ENCODE measurements at regions of chr19 and their contacts with region 1.

Region 1: DNA sequence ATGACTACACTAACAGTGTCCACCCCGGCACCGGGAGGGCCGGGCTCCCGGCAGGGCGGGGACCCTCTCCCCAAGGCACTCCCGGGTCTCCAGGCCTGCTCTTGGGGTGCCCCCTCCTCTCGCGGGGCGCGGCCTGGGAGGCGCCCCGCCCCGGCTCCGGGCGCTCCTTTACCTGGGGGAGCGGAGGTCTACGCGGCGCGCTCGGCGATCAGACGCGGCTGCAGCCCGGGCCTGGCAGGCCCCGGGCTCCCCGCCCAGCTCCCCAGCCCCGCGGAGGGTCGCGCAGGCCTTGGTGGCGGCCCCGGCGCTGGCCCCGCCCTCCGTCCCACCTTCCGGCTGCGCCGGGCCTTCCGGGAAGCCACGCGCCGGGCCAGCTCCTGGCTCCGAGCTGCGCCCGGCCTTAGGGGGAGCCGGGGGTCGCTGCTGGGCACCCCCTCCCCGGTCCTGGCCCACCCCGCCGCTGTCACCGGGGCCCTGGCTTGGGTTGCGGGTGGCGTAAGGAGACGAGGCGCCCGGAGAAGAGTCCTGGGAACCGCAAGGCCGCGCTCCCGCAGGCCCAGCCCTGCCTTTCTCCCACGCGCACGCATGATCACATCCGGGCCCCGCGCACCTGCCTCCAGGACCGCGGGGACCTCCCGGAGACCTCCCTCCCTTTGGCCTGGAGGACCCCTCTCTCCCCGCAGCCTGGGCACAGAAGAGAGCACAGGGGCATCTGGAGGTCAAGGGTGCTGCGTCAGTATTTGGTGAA is at the start of gene C19orf12:
- DNase-seq: peak; percentile 32 to 62 (median 47)
- H3K4me3 ChIP-seq: peak within 1 kb of the TSS; percentile 73 to 93 (median 84)
- H3K27ac ChIP-seq: peak within 1 kb of the TSS; percentile 74 to 90
- H3K4me1 ChIP-seq: peaks cover 7 to 52% (median 45%) of the 10 kb centered on the region in 4 experiments
- H3K27me3 ChIP-seq: no peaks in the 10 kb centered on the region

Region 2: GRCh38 chr19:29694669-29695627 is 20.2 kb before region 1 on chr19:
- CTCF ChIA-PET with region 1: interaction called, 98 read pairs
- POLR2A ChIA-PET with region 1: no interaction called
- DNase-seq: peak; percentile 74 to 85 (median 83)
- H3K4me3 ChIP-seq: no peak overlapping the region
- H3K27ac ChIP-seq: no peak overlapping the region
- H3K4me1 ChIP-seq: peaks cover 0 to 2% (median 0%) of the 10 kb centered on the region in 4 experiments
- H3K27me3 ChIP-seq: no peaks in the 10 kb centered on the region

Region 3: DNA sequence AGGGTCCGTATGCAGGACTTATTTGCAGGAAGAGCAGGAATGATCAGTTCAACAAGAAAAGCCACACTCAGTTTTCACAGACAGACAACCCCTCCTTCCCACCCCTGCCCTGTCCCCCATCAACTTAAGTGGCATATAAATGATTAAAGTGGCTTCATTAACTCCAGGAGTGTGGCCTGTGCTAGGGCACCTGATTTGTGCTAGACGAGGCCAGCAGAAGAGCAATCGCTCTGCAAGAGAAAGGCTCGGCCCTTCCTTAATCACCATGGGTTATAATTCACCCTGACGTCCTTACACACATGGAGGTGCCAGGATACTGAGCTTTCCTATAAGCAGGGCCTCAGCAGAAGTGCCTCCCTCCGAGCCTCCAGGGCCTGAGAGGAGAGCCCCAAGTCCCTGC is 14.6 kb before region 1 on chr19:
- CTCF ChIA-PET with region 1: interaction called, 98 read pairs
- POLR2A ChIA-PET with region 1: no interaction called
- DNase-seq: no peak
- H3K4me3 ChIP-seq: no peak overlapping the region
- H3K27ac ChIP-seq: no peak overlapping the region
- H3K4me1 ChIP-seq: no peaks in the 10 kb centered on the region
- H3K27me3 ChIP-seq: no peaks in the 10 kb centered on the region